ENCODE measurements at regions of chr6 and their contacts with region 1.

Region 1: DNA sequence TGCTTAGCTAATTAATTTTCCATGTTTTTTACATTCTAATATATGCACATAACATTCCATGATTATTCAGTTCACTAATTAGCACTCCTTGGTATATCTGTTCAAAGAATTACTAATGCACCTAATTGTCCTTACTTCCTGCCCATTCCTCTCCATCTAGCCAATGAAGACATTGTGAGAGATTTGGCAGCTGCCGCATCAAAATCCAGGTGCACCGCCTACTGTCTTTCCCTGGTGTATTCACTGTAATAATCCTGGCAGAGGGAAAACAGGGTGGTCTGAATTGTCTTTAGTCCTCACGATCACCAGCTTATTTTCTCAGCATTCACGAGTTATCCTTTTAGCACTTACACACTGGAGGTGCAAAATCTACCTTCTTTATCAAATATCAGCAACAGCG is 61.0 kb upstream of the SCGN start:
- DNase-seq: no peak
- H3K4me3 ChIP-seq: no peak overlapping the region
- H3K27ac ChIP-seq: no peak overlapping the region
- H3K4me1 ChIP-seq: no peaks in the 10 kb centered on the region
- H3K27me3 ChIP-seq: no peaks in the 10 kb centered on the region
- CTCF ChIP-seq: no peak
- POLR2A ChIP-seq: no peak

Region 2: GRCh38 chr6:25223490-25223991 is 367.4 kb before region 1 on chr6:
- intact Hi-C with region 1: loop called (anchors 10 kb)
- DNase-seq: no peak
- H3K4me3 ChIP-seq: peak overlapping the region in 4 of 8 donors; percentile 12 to 63 (median 20)
- H3K27ac ChIP-seq: no peak overlapping the region
- H3K4me1 ChIP-seq: peaks cover 6 to 14% (median 9%) of the 10 kb centered on the region in 6 donors
- H3K27me3 ChIP-seq: peaks cover 0 to 9% (median 0%) of the 10 kb centered on the region in 7 donors
- CTCF ChIP-seq: peak; percentile 54 to 84 (median 77)
- POLR2A ChIP-seq: no peak

Measured in spleen (tissue), 13 donors.